Endothelial cell of umbilical vein (primary cell): ENCODE measurements at regions of chr9 and their contacts with region 1.

Region 1: DNA sequence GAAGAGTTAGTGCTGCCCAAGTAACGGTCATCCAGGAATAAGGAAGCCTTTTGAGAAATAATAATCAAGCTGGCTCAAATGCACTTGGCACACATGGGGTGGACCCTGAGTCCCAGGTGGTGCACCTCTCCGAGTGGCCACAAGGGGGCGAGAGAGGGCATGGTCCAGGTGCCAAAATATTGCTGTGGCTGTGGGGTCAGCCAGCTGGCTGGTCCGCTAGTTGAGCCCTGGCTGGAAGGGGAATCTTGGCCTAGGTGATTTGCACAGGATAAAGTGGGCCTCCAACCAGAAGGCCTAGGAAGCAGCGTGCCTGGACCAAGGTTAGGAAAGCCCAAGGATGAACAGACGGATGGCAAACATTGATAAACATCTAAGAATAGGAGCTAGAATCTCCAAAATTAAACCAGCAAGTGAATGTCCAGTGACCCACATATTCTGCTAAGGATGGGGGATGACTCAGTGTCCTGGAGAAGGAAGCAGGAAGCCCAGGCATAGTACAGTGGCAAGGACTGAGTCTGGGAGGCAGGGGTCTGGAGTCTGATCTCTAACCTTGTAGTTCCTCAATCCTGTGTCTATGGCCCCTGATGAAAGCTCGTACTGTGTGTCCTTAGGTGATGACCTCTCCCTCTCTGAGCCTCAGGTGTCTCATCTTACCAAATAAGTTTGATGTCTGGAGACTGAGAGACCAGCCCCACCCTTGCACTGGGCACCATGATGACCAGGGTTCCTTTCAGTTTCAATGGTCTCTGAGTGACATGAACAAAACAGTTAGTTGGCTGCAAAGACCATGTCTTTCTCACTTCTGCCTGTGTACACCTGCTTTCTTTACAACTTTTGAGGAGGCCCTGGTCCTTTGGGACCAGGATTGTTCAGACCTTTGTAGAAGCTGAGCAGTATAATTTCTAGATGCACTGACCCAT is 19.2 kb upstream of the SHB start:
- DNase-seq: peak; percentile 70
- H3K4me3 ChIP-seq: no peak overlapping the region
- H3K27ac ChIP-seq: no peak overlapping the region
- H3K4me1 ChIP-seq: peaks cover 11% of the 10 kb centered on the region
- H3K27me3 ChIP-seq: no peaks in the 10 kb centered on the region
- CTCF ChIP-seq: peak; percentile 96 to 98
- POLR2A ChIP-seq: no peak

Region 2: GRCh38 chr9:37903647-37904444 is 184.4 kb before region 1 on chr9 and contains the start of gene SLC25A51:
- CTCF ChIA-PET with region 1: interaction called, 6 read pairs
- POLR2A ChIA-PET with region 1: no interaction called
- dilution Hi-C with region 1: no loop called
- intact Hi-C with region 1: loop called (anchors 2 kb)
- DNase-seq: peak; percentile 94
- H3K4me3 ChIP-seq: peak within 1 kb of the TSS; percentile 29 to 90 (median 74)
- H3K27ac ChIP-seq: peak within 1 kb of the TSS; percentile 5
- H3K4me1 ChIP-seq: peaks cover 21% of the 10 kb centered on the region
- H3K27me3 ChIP-seq: no peaks in the 10 kb centered on the region
- CTCF ChIP-seq: peak; percentile 98 to 100
- POLR2A ChIP-seq: peak; percentile 80
- total RNA-seq, gene SLC25A51: 36.2 and 38.3 TPM in 2 replicates

Region 3: GRCh38 chr9:38017149-38017884 is 70.9 kb before region 1 on chr9:
- CTCF ChIA-PET with region 1: interaction called, 12 read pairs
- POLR2A ChIA-PET with region 1: no interaction called
- dilution Hi-C with region 1: no loop called
- intact Hi-C with region 1: no loop called
- DNase-seq: no peak
- H3K4me3 ChIP-seq: no peak overlapping the region
- H3K27ac ChIP-seq: peak overlapping the region; percentile 34
- H3K4me1 ChIP-seq: peaks cover 57% of the 10 kb centered on the region
- H3K27me3 ChIP-seq: no peaks in the 10 kb centered on the region
- CTCF ChIP-seq: peak in 1 of 2 donors; percentile 11
- POLR2A ChIP-seq: no peak

Region 4: GRCh38 chr9:38061326-38061977 is 26.8 kb before region 1 on chr9:
- CTCF ChIA-PET with region 1: interaction called, 45 read pairs
- POLR2A ChIA-PET with region 1: no interaction called
- dilution Hi-C with region 1: no loop called
- intact Hi-C with region 1: no loop called
- DNase-seq: no peak
- H3K4me3 ChIP-seq: no peak overlapping the region
- H3K27ac ChIP-seq: no peak overlapping the region
- H3K4me1 ChIP-seq: peaks cover 65% of the 10 kb centered on the region
- H3K27me3 ChIP-seq: no peaks in the 10 kb centered on the region
- CTCF ChIP-seq: no peak
- POLR2A ChIP-seq: no peak

Region 5: GRCh38 chr9:38141746-38142591 is 53.7 kb after region 1 on chr9:
- CTCF ChIA-PET with region 1: interaction called, 10 read pairs
- POLR2A ChIA-PET with region 1: no interaction called
- dilution Hi-C with region 1: no loop called
- intact Hi-C with region 1: no loop called
- DNase-seq: peak; percentile 15
- H3K4me3 ChIP-seq: no peak overlapping the region
- H3K27ac ChIP-seq: no peak overlapping the region
- H3K4me1 ChIP-seq: peaks cover 5% of the 10 kb centered on the region
- H3K27me3 ChIP-seq: peaks cover 35 to 47% of the 10 kb centered on the region in 2 experiments
- CTCF ChIP-seq: no peak
- POLR2A ChIP-seq: no peak

Region 6: GRCh38 chr9:38362852-38363593 is 274.8 kb after region 1 on chr9:
- CTCF ChIA-PET with region 1: interaction called, 4 read pairs
- POLR2A ChIA-PET with region 1: no interaction called
- dilution Hi-C with region 1: no loop called
- intact Hi-C with region 1: loop called (anchors 2 kb)
- DNase-seq: peak; percentile 66
- H3K4me3 ChIP-seq: no peak overlapping the region
- H3K27ac ChIP-seq: no peak overlapping the region
- H3K4me1 ChIP-seq: no peaks in the 10 kb centered on the region
- H3K27me3 ChIP-seq: peaks cover 2 to 3% of the 10 kb centered on the region in 2 experiments
- CTCF ChIP-seq: peak; percentile 47 to 55
- POLR2A ChIP-seq: no peak